ENCODE measurements at regions of chr1 and their contacts with region 1.

Region 1: GRCh38 chr1:119358636-119359035 is 9.9 kb upstream of the HAO2 start:
- DNase-seq: no peak
- H3K4me3 ChIP-seq: no peak overlapping the region
- H3K27ac ChIP-seq: no peak overlapping the region
- H3K4me1 ChIP-seq: peaks cover 0 to 2% (median under 1%) of the 10 kb centered on the region in 4 experiments; a peak in 1 of 7 replicates
- H3K27me3 ChIP-seq: no peaks in the 10 kb centered on the region
- CTCF ChIP-seq: no peak
- EP300 ChIP-seq: no peak
- POLR2A ChIP-seq: no peak
- RAD21 ChIP-seq: no peak

Region 2: DNA sequence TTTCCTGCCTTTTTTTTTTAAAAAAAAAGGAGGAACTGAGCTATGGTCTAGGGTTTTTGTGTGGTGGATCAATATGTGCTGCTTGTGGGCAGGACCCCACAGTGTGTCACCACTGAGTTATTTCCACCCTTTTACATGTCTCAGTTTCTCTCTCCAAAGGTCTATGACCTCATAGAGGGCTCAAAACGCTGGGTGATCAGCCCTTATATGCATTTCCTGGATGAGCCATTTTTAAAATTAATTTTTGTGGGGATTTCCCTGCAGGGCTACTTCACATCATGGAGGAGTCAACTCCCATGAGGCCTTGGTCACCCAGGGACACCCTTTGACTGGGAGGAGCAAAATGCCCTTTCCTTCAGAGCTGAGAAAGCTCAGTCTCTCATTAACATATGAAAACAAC is 10.8 kb before region 1 on chr1:
- CTCF ChIA-PET with region 1: interaction called, 11 read pairs
- POLR2A ChIA-PET with region 1: no interaction called
- DNase-seq: no peak
- H3K4me3 ChIP-seq: no peak overlapping the region
- H3K27ac ChIP-seq: no peak overlapping the region
- H3K4me1 ChIP-seq: peaks cover 0 to 4% (median 2%) of the 10 kb centered on the region in 4 experiments; a peak in 2 of 7 replicates
- H3K27me3 ChIP-seq: no peaks in the 10 kb centered on the region
- CTCF ChIP-seq: no peak
- EP300 ChIP-seq: no peak
- POLR2A ChIP-seq: no peak
- RAD21 ChIP-seq: no peak

Measured in H1 (cell line).